ENCODE measurements at regions of chr22 and their contacts with region 1.

Region 1: DNA sequence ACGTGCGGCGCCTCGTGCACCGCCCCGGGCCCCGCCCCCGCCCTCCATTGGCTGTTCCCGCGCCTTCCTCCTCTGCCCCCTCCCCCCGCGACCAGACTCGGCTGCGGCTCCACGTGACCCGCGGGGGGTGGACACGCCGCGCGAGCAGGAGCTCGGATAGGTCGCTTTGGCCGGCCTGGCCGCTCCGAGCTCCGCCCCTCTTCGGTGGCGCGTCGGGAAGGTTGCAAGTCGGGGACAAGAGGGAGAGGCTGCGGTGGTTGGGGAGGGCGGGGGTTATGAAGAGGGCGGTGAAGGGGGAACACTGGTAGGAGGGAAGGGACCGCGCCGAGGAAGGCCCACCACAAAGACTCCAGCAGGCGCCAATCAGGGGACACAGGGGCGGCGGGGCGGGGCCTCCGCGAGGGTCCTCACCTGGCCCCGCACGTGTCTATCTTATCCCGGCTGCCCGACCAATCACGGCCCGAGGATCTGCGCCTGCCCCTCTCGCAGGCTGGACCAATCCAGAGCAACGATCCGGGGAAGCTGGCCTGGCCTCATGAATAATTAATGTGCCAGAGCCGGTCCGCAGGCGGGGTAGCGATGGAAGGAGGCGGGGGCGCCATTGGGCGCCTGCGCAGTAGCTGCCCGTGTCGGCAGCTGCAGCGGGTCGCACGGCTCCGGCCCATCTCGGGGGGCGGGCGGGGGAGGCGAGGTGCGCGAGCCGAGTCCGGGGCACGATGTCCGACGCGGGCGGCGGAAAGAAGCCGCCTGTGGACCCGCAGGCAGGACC is at the start of gene TEF:
- DNase-seq: peak; percentile 98
- H3K4me3 ChIP-seq: peak within 1 kb of the TSS; percentile 65 to 78 (median 65)
- H3K27ac ChIP-seq: peak within 1 kb of the TSS; percentile 89
- H3K4me1 ChIP-seq: peaks cover 24% of the 10 kb centered on the region
- H3K27me3 ChIP-seq: no peaks in the 10 kb centered on the region
- CTCF ChIP-seq: no peak
- total RNA-seq, gene TEF: 5.2 TPM

Region 2: DNA sequence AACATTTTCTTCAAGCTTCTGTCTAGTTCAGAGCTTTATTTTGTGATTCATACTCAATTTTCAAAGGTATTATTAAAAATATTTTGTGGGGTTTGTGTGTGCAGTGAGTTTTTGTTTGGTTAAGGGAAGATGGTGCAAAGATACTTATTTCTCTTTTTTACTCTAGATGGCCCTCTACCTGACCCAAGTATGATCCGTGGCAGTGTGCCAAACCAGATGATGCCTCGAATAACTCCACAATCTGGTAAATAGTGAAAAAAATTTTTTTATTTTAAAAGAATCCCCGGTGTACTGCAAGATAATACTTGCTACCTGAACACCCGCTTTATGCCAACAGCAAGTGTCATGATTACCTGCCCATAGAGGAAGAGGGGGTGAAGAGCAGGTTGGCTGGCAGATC is 234.9 kb before region 1 on chr22:
- CTCF ChIA-PET with region 1: no interaction called
- dilution Hi-C with region 1: no loop called
- in situ Hi-C with region 1: no loop called
- intact Hi-C with region 1: no loop called
- DNase-seq: no peak
- H3K4me3 ChIP-seq: no peak overlapping the region
- H3K27ac ChIP-seq: no peak overlapping the region
- H3K4me1 ChIP-seq: no peaks in the 10 kb centered on the region
- H3K27me3 ChIP-seq: no peaks in the 10 kb centered on the region
- CTCF ChIP-seq: no peak

Region 3: GRCh38 chr22:41285820-41286638 is 95.5 kb before region 1 on chr22 and contains the start of gene RANGAP1:
- CTCF ChIA-PET with region 1: no interaction called
- dilution Hi-C with region 1: no loop called
- in situ Hi-C with region 1: no loop called
- intact Hi-C with region 1: loop called (anchors 5 kb)
- DNase-seq: peak; percentile 99
- H3K4me3 ChIP-seq: peak within 1 kb of the TSS; percentile 79 to 90 (median 88)
- H3K27ac ChIP-seq: peak within 1 kb of the TSS; percentile 90
- H3K4me1 ChIP-seq: peaks cover 58% of the 10 kb centered on the region
- H3K27me3 ChIP-seq: no peaks in the 10 kb centered on the region
- CTCF ChIP-seq: peak in 1 of 2 donors; percentile 36
- total RNA-seq, gene RANGAP1: 47.8 to 127 TPM

Region 4: GRCh38 chr22:41543854-41544670 is 162.5 kb after region 1 on chr22 and contains the start of gene POLR3H:
- CTCF ChIA-PET with region 1: no interaction called
- dilution Hi-C with region 1: no loop called
- in situ Hi-C with region 1: no loop called
- intact Hi-C with region 1: no loop called
- DNase-seq: peak; percentile 96
- H3K4me3 ChIP-seq: peak within 1 kb of the TSS; percentile 73 to 95 (median 80)
- H3K27ac ChIP-seq: peak within 1 kb of the TSS; percentile 61
- H3K4me1 ChIP-seq: peaks cover 15% of the 10 kb centered on the region
- H3K27me3 ChIP-seq: no peaks in the 10 kb centered on the region
- CTCF ChIP-seq: peak; percentile 33 to 73
- total RNA-seq, gene POLR3H: 17.2 to 47.0 TPM

Measured in mammary epithelial cell (primary cell).